ENCODE measurements at regions of chr4 and their contacts with region 1.

Region 1: DNA sequence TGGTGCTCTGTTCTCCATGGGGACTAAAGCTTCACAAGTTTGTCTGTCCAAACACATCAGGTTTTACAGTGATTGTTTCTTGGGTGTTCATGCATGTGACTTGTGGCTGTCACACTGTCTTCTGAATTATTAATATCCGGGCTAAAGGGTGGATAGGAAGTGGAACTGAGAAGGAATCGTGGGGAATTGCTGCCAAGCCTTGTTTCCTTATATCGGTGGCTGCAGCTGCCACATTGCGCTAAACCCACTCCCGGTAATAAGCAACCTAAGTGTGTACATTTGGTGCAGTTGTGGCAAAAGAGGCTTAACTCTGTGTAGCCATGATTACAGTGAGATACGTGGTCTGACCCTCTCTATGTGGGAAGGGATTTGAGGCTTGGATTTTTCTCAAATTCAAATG is 30.7 kb downstream of the SEPTIN11 start:
- DNase-seq: no peak
- ATAC-seq: no peak
- H3K4me3 ChIP-seq: no peak overlapping the region
- H3K4me3 Mint-ChIP-seq: no peak overlapping the region
- H3K27ac ChIP-seq: no peak overlapping the region
- H3K27ac Mint-ChIP-seq: no peak overlapping the region
- H3K4me1 ChIP-seq: peaks cover 47% of the 10 kb centered on the region
- H3K4me1 Mint-ChIP-seq: peaks cover 81% of the 10 kb centered on the region
- H3K27me3 ChIP-seq: no peaks in the 10 kb centered on the region
- H3K27me3 Mint-ChIP-seq: no peaks in the 10 kb centered on the region
- CTCF ChIP-seq: no peak

Region 2: DNA sequence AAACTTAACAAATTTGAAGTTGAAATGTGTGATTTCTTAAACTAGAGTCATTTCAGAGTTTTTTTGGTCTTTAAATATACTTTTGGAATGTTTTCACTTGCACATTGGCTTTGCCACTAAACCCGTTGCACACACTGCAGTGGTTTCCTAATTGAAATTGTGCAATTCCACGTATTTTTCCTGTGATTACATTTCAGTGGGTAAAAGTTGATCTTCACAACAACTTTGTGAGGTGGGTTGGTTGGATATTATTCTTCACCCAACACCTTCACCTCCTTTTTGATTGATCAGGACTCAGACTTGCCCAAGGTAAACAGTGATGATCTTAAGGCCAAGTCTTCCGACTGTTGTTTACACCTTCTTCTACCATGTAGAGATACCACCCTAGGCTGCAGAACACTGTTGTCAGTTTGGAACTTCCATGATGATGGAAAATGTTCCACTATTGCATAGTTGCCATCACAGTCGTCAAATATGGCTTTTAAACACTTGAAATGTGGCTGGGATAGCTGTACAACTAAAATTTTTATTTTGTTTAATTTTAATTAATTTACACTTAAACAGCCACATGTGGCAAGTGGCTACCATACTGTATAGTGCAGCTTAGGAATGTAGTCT is 17.0 kb before region 1 on chr4:
- CTCF ChIA-PET with region 1: interaction called, 4 read pairs
- POLR2A ChIA-PET with region 1: no interaction called
- intact Hi-C with region 1: loop called in 1 of 2 experiments (anchors 2 kb)
- DNase-seq: no peak
- ATAC-seq: no peak
- H3K4me3 ChIP-seq: no peak overlapping the region
- H3K4me3 Mint-ChIP-seq: no peak overlapping the region
- H3K27ac ChIP-seq: no peak overlapping the region
- H3K27ac Mint-ChIP-seq: no peak overlapping the region
- H3K4me1 ChIP-seq: peaks cover 6% of the 10 kb centered on the region
- H3K4me1 Mint-ChIP-seq: peaks cover 26% of the 10 kb centered on the region
- H3K27me3 ChIP-seq: no peaks in the 10 kb centered on the region
- H3K27me3 Mint-ChIP-seq: no peaks in the 10 kb centered on the region
- CTCF ChIP-seq: no peak